ENCODE measurements at regions of chr4 and their contacts with region 1.

Region 1: DNA sequence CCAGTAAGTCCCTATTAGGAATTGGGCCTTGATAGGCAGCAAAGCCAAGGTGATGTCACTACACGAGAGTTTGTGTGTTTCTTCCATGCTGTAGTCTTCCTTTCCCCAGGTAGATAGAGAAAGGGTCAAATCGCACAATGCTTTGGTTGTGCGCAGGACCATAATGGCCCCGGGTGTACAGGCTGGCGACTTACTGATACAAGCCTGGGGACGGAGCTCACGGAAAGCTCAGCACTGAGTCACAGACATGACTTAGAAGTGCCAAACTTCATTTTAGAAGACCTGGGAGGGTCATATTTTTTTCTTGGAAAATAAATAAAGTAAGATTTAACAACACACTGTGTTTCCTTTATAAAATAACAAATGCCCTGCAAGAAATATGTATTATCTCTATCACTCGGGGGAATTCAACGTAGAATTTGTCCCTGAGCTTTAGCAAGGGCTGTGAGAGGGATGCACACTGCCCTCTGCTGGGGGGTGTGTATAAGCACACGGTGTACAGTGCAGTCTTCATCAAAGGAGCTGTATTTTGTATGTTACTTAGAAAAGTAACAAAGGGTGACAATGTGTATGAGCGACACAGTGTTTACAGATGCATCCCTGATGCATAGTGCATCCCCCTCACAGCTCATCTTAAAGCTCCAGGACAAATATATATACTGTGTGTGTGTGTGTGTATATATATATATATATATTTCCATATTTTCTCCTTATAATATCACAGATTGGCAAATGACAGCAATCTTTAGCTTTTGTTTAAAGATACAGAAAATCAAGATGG is 254.5 kb upstream of the VEGFC start:
- DNase-seq: peak; percentile 33 to 66 (median 53)
- ATAC-seq: peak in 3 of 4 donors; percentile 85 to 89 (median 88)
- H3K4me3 ChIP-seq: no peak overlapping the region
- H3K27ac ChIP-seq: no peak overlapping the region
- H3K4me1 ChIP-seq: no peaks in the 10 kb centered on the region
- H3K27me3 ChIP-seq: peaks cover 0 to 3% (median 0%) of the 10 kb centered on the region in 9 donors
- CTCF ChIP-seq: peak; percentile 73 to 92 (median 86)
- POLR2A ChIP-seq: no peak

Region 2: DNA sequence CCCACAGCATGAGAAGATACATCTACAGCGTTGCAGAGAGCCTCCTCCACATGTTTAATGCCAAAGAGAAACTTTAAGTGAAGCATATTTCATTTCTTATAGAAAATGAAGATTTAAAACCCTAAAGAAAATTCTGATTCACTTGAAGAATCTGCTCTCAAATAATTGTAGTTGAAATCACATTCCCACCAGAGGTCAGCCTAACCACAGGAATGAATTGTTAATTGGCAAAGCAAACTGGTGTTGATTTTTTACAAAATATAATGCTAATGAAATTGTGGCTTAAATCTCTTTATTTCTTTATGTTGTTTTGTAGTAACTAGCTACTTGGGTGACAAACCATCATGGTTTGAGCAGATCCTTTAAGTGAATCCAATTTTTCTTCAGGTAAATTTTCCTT is 1012.8 kb before region 1 on chr4:
- intact Hi-C with region 1: loop called in 1 of 10 experiments (anchors 10 kb)
- DNase-seq: no peak
- ATAC-seq: no peak
- H3K4me3 ChIP-seq: no peak overlapping the region
- H3K27ac ChIP-seq: no peak overlapping the region
- H3K4me1 ChIP-seq: no peaks in the 10 kb centered on the region
- H3K27me3 ChIP-seq: no peaks in the 10 kb centered on the region
- CTCF ChIP-seq: peak in 9 of 12 donors; percentile 29 to 56 (median 39)
- POLR2A ChIP-seq: no peak

Region 3: GRCh38 chr4:176377780-176378179 is 669.5 kb before region 1 on chr4:
- intact Hi-C with region 1: loop called (anchors 1 to 5 kb)
- DNase-seq: no peak
- ATAC-seq: peak in 1 of 4 donors; percentile 27
- H3K4me3 ChIP-seq: no peak overlapping the region
- H3K27ac ChIP-seq: no peak overlapping the region
- H3K4me1 ChIP-seq: no peaks in the 10 kb centered on the region
- H3K27me3 ChIP-seq: no peaks in the 10 kb centered on the region
- CTCF ChIP-seq: peak; percentile 22 to 62 (median 50)
- POLR2A ChIP-seq: no peak

Region 4: GRCh38 chr4:176383273-176384077 is 663.8 kb before region 1 on chr4:
- intact Hi-C with region 1: loop called in 5 of 10 experiments (anchors 1 to 5 kb)
- DNase-seq: peak in 2 of 5 donors; percentile 11 to 21
- ATAC-seq: peak in 3 of 4 donors; percentile 12 to 74 (median 32)
- H3K4me3 ChIP-seq: peak overlapping the region in 6 of 12 donors; percentile 4 to 33 (median 10)
- H3K27ac ChIP-seq: peak overlapping the region in 10 of 12 donors; percentile 12 to 81 (median 56)
- H3K4me1 ChIP-seq: peaks cover 0 to 21% (median 0%) of the 10 kb centered on the region in 12 donors
- H3K27me3 ChIP-seq: no peaks in the 10 kb centered on the region
- CTCF ChIP-seq: no peak
- POLR2A ChIP-seq: no peak

Region 5: GRCh38 chr4:176563591-176563990 is 483.7 kb before region 1 on chr4:
- intact Hi-C with region 1: loop called in 8 of 10 experiments (anchors 2 to 10 kb)
- DNase-seq: no peak
- ATAC-seq: peak in 1 of 4 donors; percentile 60
- H3K4me3 ChIP-seq: no peak overlapping the region
- H3K27ac ChIP-seq: no peak overlapping the region
- H3K4me1 ChIP-seq: no peaks in the 10 kb centered on the region
- H3K27me3 ChIP-seq: no peaks in the 10 kb centered on the region
- CTCF ChIP-seq: peak in 9 of 12 donors; percentile 12 to 46 (median 29)
- POLR2A ChIP-seq: no peak

Measured in heart left ventricle (tissue), 16 donors.